CD8-positive, alpha-beta T cell (primary cell): ENCODE measurements at regions of chr1 and their contacts with region 1.

Region 1: GRCh38 chr1:1574721-1575537 is at the start of gene SSU72:
- DNase-seq: peak; percentile 84 to 96 (median 93)
- ATAC-seq: peak; percentile 82
- H3K4me3 ChIP-seq: peak within 1 kb of the TSS; percentile 78 to 92
- H3K4me3 Mint-ChIP-seq: peak within 1 kb of the TSS; percentile 98
- H3K27ac ChIP-seq: peak within 1 kb of the TSS; percentile 99 to 100
- H3K27ac Mint-ChIP-seq: peak within 1 kb of the TSS; percentile 100
- H3K4me1 ChIP-seq: peaks cover 39% of the 10 kb centered on the region
- H3K4me1 Mint-ChIP-seq: peaks cover 32% of the 10 kb centered on the region
- H3K27me3 ChIP-seq: no peaks in the 10 kb centered on the region
- H3K27me3 Mint-ChIP-seq: no peaks in the 10 kb centered on the region
- CTCF ChIP-seq: no peak
- total RNA-seq, gene SSU72: 86.8 to 87.9 TPM

Region 2: GRCh38 chr1:1406817-1407635 is 167.9 kb before region 1 on chr1 and contains the start of gene MRPL20:
- CTCF ChIA-PET with region 1: no interaction called
- POLR2A ChIA-PET with region 1: no interaction called
- intact Hi-C with region 1: loop called in 1 of 2 experiments (anchors 5 kb)
- DNase-seq: peak; percentile 89 to 98 (median 96)
- ATAC-seq: peak; percentile 95
- H3K4me3 ChIP-seq: peak within 1 kb of the TSS; percentile 79 to 87
- H3K4me3 Mint-ChIP-seq: peak within 1 kb of the TSS; percentile 94
- H3K27ac ChIP-seq: peak within 1 kb of the TSS; percentile 81 to 87
- H3K27ac Mint-ChIP-seq: peak within 1 kb of the TSS; percentile 96
- H3K4me1 ChIP-seq: peaks cover 20% of the 10 kb centered on the region
- H3K4me1 Mint-ChIP-seq: peaks cover 46% of the 10 kb centered on the region
- H3K27me3 ChIP-seq: no peaks in the 10 kb centered on the region
- H3K27me3 Mint-ChIP-seq: no peaks in the 10 kb centered on the region
- CTCF ChIP-seq: no peak
- total RNA-seq, gene MRPL20: 92.6 to 92.7 TPM

Region 3: DNA sequence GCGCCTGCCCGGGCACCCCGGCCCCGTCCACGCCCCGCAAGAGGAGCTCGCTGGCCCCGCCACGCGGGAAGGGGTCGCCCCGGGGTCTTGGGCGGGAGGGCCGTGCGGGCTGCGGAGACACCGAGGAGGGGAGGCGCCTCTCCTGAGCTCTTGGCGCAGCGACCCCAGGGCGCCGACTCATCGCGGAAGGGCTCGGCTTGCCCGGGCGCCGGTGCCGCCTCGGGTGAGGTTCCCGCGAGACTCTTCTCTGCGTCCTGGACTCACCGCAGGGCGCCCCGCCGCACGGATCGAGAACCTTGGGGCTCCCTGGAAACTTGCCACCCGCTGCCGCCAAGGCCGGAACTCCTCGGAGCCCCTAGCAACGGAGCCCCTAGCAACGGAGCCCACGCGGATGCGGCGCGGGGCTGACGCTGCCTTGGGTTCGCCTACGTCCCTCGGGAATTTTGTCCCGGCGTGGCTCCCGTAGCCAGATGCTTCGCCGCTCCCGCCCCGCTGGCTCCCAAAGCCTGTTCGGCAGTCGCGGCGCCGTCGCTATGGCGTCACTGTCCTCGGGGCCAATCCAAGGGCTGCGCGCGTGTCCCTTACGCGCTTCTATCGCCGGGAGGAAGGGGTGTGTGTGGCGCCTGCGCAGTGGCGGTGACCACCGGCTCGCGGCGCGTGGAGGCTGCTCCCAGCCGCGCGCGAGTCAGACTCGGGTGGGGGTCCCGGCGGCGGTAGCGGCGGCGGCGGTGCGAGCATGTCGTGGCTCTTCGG is 63.2 kb before region 1 on chr1 and contains the start of gene ATAD3A:
- CTCF ChIA-PET with region 1: no interaction called
- POLR2A ChIA-PET with region 1: no interaction called
- intact Hi-C with region 1: loop called (anchors 1 kb)
- DNase-seq: peak; percentile 83 to 98 (median 95)
- ATAC-seq: peak; percentile 94
- H3K4me3 ChIP-seq: peak within 1 kb of the TSS; percentile 81 to 99
- H3K4me3 Mint-ChIP-seq: peak within 1 kb of the TSS; percentile 88
- H3K27ac ChIP-seq: peak within 1 kb of the TSS; percentile 90 to 97
- H3K27ac Mint-ChIP-seq: peak within 1 kb of the TSS; percentile 94
- H3K4me1 ChIP-seq: peaks cover 6% of the 10 kb centered on the region
- H3K4me1 Mint-ChIP-seq: peaks cover 11% of the 10 kb centered on the region
- H3K27me3 ChIP-seq: no peaks in the 10 kb centered on the region
- H3K27me3 Mint-ChIP-seq: no peaks in the 10 kb centered on the region
- CTCF ChIP-seq: no peak
- total RNA-seq, gene ATAD3A: 27.0 to 29.6 TPM

Region 4: GRCh38 chr1:1615256-1616044 is 40.5 kb after region 1 on chr1 and contains the start of gene MIB2:
- CTCF ChIA-PET with region 1: no interaction called
- POLR2A ChIA-PET with region 1: interaction called, 27 read pairs
- intact Hi-C with region 1: loop called (anchors 1 kb)
- DNase-seq: peak; percentile 94 to 100 (median 98)
- ATAC-seq: peak; percentile 82
- H3K4me3 ChIP-seq: peak within 1 kb of the TSS; percentile 91 to 100
- H3K4me3 Mint-ChIP-seq: peak within 1 kb of the TSS; percentile 90
- H3K27ac ChIP-seq: peak within 1 kb of the TSS; percentile 100
- H3K27ac Mint-ChIP-seq: peak within 1 kb of the TSS; percentile 100
- H3K4me1 ChIP-seq: peaks cover 26% of the 10 kb centered on the region
- H3K4me1 Mint-ChIP-seq: peaks cover 32% of the 10 kb centered on the region
- H3K27me3 ChIP-seq: no peaks in the 10 kb centered on the region
- H3K27me3 Mint-ChIP-seq: no peaks in the 10 kb centered on the region
- CTCF ChIP-seq: no peak
- total RNA-seq, gene MIB2: 57.0 to 57.3 TPM

Region 5: DNA sequence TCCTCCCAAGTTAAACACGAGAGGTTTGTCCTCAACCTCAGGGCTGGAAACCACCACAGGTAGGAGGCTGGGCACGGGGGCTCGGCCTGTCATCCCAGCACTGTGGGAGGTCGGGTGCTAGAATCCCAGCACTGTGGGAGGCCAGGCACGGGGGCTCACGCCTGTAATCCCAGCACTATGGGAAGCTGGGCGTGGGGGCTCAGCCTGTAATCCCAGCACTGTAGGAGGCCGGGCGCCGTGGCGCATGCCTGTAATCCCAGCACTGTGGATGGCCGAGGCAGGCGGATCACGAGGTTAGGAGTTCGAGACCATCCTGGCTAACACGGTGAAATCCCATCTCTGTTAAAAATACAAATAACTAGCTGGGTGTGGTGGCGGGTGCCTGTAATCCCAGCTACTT is 155.9 kb after region 1 on chr1:
- CTCF ChIA-PET with region 1: no interaction called
- POLR2A ChIA-PET with region 1: no interaction called
- intact Hi-C with region 1: loop called in 1 of 2 experiments (anchors 5 kb)
- DNase-seq: no peak
- ATAC-seq: no peak
- H3K4me3 ChIP-seq: no peak overlapping the region
- H3K4me3 Mint-ChIP-seq: no peak overlapping the region
- H3K27ac ChIP-seq: no peak overlapping the region
- H3K27ac Mint-ChIP-seq: no peak overlapping the region
- H3K4me1 ChIP-seq: peaks cover 8% of the 10 kb centered on the region
- H3K4me1 Mint-ChIP-seq: peaks cover 14% of the 10 kb centered on the region
- H3K27me3 ChIP-seq: no peaks in the 10 kb centered on the region
- H3K27me3 Mint-ChIP-seq: no peaks in the 10 kb centered on the region
- CTCF ChIP-seq: no peak